ENCODE measurements at regions of chr2 and their contacts with region 1.

Region 1: DNA sequence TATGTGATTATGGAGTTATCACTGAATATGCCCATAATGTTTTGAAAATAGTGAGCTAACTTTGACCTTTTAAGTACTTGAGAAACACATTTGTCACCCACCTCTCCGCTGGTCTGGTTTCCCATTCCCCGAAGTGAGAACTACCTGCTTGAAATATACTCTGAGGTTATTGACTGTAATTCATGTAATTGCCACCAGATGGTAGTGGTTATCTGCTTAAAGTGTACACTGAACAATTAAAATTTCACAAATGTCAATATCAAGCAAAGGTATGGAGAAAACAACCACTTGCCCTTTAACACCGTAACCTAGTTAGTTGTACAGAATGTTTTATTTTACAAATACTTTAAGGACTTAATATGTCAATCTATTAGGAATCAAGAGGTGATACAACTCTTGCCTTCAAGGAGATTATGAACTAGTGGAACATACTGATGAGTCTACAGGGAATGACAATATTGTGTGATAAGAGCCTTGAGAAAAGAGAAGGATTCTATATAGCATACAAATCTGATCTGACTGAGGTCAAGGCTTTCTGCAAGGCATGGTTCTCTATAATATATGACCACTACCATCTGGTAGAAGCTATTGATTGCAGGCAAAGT is 316.8 kb upstream of the KCNH7 start:
- DNase-seq: peak; percentile 11 to 25 (median 24)
- ATAC-seq: peak; percentile 38; the same call in 2 of the 3 replicates
- H3K4me3 ChIP-seq: no peak overlapping the region
- H3K27ac ChIP-seq: no peak overlapping the region
- H3K4me1 ChIP-seq: no peaks in the 10 kb centered on the region
- H3K27me3 ChIP-seq: no peaks in the 10 kb centered on the region
- CTCF ChIP-seq: peak in 2 of 3 experiments; percentile 32 to 46; a peak in 2 of 6 replicates
- EP300 ChIP-seq: no peak
- POLR2A ChIP-seq: no peak
- RAD21 ChIP-seq: peak; percentile 37 to 61; a peak in 3 of 4 replicates

Region 2: DNA sequence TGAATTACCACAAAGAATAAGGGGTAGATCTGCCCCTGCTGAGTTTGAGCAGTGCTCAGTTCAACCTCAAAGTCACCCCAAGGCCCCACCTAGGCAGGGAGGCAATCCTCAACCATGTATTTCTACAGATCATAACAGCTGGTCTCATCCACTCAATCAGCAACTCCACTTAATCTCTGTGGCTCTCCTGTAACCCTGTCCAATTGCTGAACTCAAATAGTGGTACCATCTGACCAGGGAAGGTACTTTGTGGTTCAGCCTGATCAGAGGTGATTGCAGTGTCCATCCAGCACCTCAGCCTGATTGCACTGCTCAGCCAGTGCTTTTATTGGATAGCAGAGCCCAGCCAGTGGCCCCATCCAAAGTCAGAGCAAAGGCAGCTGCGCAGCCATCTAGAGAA is 1622.2 kb before region 1 on chr2:
- CTCF ChIA-PET with region 1: no interaction called
- POLR2A ChIA-PET with region 1: no interaction called
- in situ Hi-C with region 1: no loop called
- intact Hi-C with region 1: no loop called
- DNase-seq: no peak
- ATAC-seq: no peak
- H3K4me3 ChIP-seq: no peak overlapping the region
- H3K27ac ChIP-seq: no peak overlapping the region
- H3K4me1 ChIP-seq: no peaks in the 10 kb centered on the region
- H3K27me3 ChIP-seq: no peaks in the 10 kb centered on the region
- CTCF ChIP-seq: no peak
- EP300 ChIP-seq: no peak
- POLR2A ChIP-seq: no peak
- RAD21 ChIP-seq: no peak

Region 3: DNA sequence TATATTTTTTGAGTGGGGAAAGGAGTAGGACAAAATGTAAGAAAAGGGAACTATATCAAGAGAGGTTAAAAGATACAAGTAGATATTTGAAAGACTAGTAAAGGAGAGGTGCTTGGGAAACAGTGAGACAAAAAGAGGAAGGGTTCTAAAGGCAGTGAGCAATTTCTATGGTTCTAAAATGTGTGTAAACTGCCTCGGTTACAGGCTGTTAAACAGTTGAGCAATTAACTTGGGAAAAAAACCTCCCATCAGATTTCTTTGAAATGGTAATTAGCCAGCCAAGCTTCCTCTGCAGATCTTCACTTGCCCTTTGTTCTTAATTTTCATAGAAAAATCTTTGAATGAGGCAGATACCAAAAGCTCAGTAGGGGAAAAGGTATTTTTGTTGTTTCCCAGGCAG is 78.1 kb before region 1 on chr2:
- CTCF ChIA-PET with region 1: no interaction called
- POLR2A ChIA-PET with region 1: no interaction called
- in situ Hi-C with region 1: no loop called
- intact Hi-C with region 1: no loop called
- DNase-seq: no peak
- ATAC-seq: no peak
- H3K4me3 ChIP-seq: no peak overlapping the region
- H3K27ac ChIP-seq: no peak overlapping the region
- H3K4me1 ChIP-seq: no peaks in the 10 kb centered on the region
- H3K27me3 ChIP-seq: no peaks in the 10 kb centered on the region
- CTCF ChIP-seq: no peak
- EP300 ChIP-seq: no peak
- POLR2A ChIP-seq: no peak
- RAD21 ChIP-seq: no peak

Region 4: GRCh38 chr2:163505281-163505680 is 349.9 kb after region 1 on chr2:
- CTCF ChIA-PET with region 1: no interaction called
- POLR2A ChIA-PET with region 1: no interaction called
- in situ Hi-C with region 1: no loop called
- intact Hi-C with region 1: no loop called
- DNase-seq: no peak
- ATAC-seq: no peak
- H3K4me3 ChIP-seq: no peak overlapping the region
- H3K27ac ChIP-seq: no peak overlapping the region
- H3K4me1 ChIP-seq: no peaks in the 10 kb centered on the region
- H3K27me3 ChIP-seq: no peaks in the 10 kb centered on the region
- CTCF ChIP-seq: no peak
- EP300 ChIP-seq: no peak
- POLR2A ChIP-seq: no peak
- RAD21 ChIP-seq: no peak

Region 5: DNA sequence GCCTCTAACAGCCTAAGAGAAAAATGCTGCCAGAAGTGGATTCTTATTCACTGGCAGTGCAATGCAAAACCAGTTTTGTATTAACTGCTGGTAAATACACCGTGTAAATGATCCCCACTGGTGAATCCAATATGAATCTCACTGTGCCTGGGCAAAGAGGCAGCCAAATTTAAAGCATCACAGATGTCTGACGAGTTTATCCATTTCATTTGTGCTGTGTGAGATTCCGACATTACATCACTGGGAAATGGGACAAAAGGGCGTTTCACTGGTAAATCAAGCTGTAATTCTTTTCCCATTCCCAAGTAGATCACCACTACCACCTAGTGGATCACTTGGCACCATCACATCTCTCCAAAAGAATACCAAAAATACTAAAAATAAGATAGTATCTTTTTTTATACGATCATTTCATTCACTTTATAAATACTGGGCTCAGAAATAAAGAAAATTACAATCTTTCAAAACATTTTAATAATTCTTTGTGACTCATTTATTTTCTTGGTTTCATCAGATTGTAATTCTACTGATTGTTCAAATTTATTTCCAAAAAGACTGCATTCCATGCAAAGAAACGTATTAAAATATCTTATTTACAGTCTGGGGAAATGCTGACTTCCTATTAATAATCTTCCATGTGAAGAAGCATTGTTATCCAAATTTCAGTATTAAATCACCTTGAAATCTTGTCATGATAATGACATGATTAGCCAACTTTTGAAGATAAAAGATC is 1340.3 kb after region 1 on chr2:
- CTCF ChIA-PET with region 1: no interaction called
- POLR2A ChIA-PET with region 1: no interaction called
- in situ Hi-C with region 1: no loop called
- intact Hi-C with region 1: loop called (anchors 10 kb)
- DNase-seq: peak in 1 of 4 experiments; percentile 9
- ATAC-seq: no peak
- H3K4me3 ChIP-seq: no peak overlapping the region
- H3K27ac ChIP-seq: no peak overlapping the region
- H3K4me1 ChIP-seq: no peaks in the 10 kb centered on the region
- H3K27me3 ChIP-seq: no peaks in the 10 kb centered on the region
- CTCF ChIP-seq: peak in 2 of 3 experiments; percentile 10 to 28; a peak in 3 of 6 replicates
- EP300 ChIP-seq: no peak
- POLR2A ChIP-seq: no peak
- RAD21 ChIP-seq: peak; percentile 23 to 37; a peak in 2 of 4 replicates

Region 6: GRCh38 chr2:164599966-164600589 is 1444.7 kb after region 1 on chr2:
- CTCF ChIA-PET with region 1: interaction called, 3 read pairs
- POLR2A ChIA-PET with region 1: no interaction called
- in situ Hi-C with region 1: no loop called
- intact Hi-C with region 1: loop called (anchors 10 kb)
- DNase-seq: peak; percentile 19 to 67 (median 50)
- ATAC-seq: peak; percentile 79
- H3K4me3 ChIP-seq: no peak overlapping the region
- H3K27ac ChIP-seq: no peak overlapping the region
- H3K4me1 ChIP-seq: no peaks in the 10 kb centered on the region
- H3K27me3 ChIP-seq: no peaks in the 10 kb centered on the region
- CTCF ChIP-seq: peak; percentile 59 to 95 (median 89)
- EP300 ChIP-seq: no peak
- POLR2A ChIP-seq: no peak
- RAD21 ChIP-seq: peak; percentile 48 to 64; a peak in 3 of 4 replicates

Region 7: GRCh38 chr2:164717000-164717803 is 1561.8 kb after region 1 on chr2:
- CTCF ChIA-PET with region 1: no interaction called
- POLR2A ChIA-PET with region 1: no interaction called
- in situ Hi-C with region 1: no loop called
- intact Hi-C with region 1: loop called (anchors 5 kb)
- DNase-seq: peak in 2 of 4 experiments; percentile 11 to 42
- ATAC-seq: no peak
- H3K4me3 ChIP-seq: no peak overlapping the region
- H3K27ac ChIP-seq: no peak overlapping the region
- H3K4me1 ChIP-seq: no peaks in the 10 kb centered on the region
- H3K27me3 ChIP-seq: no peaks in the 10 kb centered on the region
- CTCF ChIP-seq: peak in 2 of 3 experiments; percentile 15 to 67; a peak in 4 of 6 replicates
- EP300 ChIP-seq: no peak
- POLR2A ChIP-seq: no peak
- RAD21 ChIP-seq: peak; percentile 15 to 64; a peak in 2 of 4 replicates

Measured in K562 (cell line).